GM10248 (cell line): ENCODE measurements at regions of chr15 and their contacts with region 1.

Region 1: GRCh38 chr15:79184465-79184892 is 93.9 kb upstream of the RASGRF1 start:
- DNase-seq: peak; percentile 74
- CTCF ChIP-seq: peak; percentile 96

Region 2: DNA sequence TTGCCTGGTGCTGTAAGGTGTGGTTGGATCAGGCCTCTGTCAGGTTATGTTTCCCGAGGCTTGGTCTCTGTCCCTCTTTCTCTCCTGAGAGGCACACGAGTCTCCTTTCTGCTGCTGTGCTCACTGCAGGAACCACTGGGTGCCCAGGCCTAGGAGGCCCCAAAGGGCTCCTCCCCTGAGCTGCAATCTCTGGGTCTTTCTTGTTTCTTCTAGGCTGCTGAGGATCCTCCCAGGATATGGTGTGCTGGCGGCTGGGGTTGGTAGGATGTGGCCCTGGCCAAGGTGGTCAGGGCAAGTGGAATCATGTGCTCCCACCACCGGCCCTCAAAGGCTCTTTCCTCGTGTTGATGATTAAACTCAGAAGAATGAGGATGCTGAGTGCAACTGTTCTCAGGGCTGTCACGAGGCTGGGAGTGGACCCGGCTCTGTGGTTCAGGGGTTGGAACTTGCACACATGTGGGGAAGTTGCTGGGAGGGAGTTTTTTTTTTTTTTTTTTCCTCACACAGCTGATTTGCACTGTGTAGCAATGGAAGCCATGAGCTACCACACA is 196.0 kb before region 1 on chr15:
- CTCF ChIA-PET with region 1: interaction called, 10 read pairs
- POLR2A ChIA-PET with region 1: no interaction called
- DNase-seq: peak; percentile 47
- CTCF ChIP-seq: no peak

Region 3: GRCh38 chr15:79028411-79028964 is 156.0 kb before region 1 on chr15:
- CTCF ChIA-PET with region 1: interaction called, 247 read pairs
- POLR2A ChIA-PET with region 1: no interaction called
- DNase-seq: peak; percentile 73
- CTCF ChIP-seq: peak; percentile 87

Region 4: DNA sequence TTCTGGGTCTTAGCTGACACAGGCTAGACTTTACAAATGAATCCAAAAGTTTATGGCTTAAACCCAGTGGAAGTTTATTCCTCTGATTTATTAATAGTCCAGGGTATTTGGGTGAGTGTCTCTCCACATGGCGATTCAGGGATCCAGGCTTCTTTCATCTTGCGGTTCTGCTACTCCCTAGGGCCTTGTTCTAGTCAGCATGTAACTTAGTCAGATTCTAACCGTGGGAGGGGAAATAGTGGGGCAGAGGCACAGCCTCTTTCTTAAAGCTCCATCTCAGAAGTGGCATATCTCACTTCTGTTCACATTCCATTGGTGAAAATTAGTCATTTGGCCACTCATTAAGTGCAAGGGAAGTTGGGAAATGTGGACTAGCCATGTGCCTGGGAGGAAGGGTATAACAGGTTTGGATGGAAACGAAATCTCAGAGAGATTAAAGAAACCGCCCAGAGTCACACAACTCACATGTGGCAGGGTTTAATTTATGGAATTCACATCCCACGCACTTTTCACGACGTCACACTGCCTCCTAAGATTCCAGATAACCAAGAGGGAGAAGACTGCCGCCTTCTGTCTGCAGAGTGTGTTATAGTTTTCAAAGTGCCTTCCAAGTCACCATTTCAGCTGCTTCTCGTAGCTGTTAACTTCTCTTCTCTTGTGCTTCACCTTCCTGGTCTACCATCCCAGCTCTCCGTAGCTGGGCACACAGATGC is 82.5 kb before region 1 on chr15:
- CTCF ChIA-PET with region 1: interaction called, 11 read pairs
- POLR2A ChIA-PET with region 1: no interaction called
- DNase-seq: no peak
- CTCF ChIP-seq: no peak

Region 5: DNA sequence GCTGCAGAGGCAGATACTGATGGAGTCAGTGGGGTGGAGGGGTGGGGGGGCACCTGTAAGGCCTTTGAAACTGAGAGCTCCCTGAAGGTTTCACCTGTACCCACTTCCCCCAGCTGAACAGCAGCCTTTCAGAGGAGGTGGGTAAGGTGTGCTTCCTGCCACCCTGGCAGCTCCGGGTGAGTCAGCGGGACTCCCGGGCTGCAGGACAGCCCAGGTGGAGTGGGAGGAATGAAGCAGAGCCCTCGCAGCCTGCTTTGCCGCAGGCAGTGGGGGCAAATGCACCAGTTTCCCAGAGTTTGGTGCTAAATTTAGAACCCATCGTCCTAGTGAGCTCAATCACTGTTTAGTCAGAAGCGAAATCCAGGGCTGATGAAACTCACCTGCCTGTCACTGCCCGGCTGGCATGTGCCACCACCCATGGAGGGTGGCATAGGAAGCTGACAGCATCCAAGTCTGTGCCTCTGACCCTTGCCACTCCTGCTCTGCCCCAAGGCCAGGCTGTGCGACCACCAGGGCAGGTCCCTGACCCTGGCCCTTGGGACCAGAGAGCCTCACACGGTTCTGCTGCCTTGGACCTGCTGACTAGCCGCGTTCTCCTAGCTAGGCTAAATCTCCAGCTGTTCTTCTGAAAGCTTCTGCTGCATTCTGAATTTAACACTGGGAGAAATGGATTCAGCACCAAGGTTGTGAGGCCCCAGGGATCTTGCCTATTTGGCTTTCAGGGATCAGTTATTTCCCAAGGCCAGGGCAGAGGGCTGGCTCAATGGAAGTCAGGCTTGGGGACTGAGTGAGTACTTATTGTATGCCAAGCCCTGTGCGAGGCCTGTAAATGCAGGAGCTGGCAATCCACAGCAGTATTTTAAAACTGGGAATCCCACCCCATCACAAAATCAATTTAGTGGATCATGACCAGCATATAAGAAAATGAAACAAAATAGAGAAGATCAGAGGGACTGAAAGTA is 26.6 kb before region 1 on chr15:
- CTCF ChIA-PET with region 1: interaction called, 11 read pairs
- POLR2A ChIA-PET with region 1: no interaction called
- DNase-seq: no peak
- CTCF ChIP-seq: no peak

Region 6: DNA sequence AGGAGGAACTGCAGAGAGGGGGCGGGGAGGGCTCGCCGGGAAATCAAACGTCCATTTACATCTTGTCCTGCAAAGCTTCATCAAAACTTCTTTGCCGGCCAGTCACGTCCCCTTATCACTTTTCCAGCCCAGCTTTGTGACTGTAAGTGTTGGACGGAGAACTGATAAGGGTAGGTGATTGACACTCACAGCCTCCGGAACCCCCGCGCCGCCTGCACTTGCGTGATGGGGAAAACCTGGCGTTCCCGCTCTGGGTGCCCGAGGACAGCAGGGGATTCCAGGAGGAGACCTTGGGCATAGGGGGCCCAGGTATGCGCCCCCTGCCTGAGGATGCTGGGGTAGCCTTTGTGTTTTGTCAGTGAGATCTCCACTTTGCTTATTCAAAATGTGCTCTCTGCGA is 25.2 kb after region 1 on chr15:
- CTCF ChIA-PET with region 1: interaction called, 43 read pairs
- POLR2A ChIA-PET with region 1: no interaction called
- DNase-seq: no peak
- CTCF ChIP-seq: no peak

Region 7: DNA sequence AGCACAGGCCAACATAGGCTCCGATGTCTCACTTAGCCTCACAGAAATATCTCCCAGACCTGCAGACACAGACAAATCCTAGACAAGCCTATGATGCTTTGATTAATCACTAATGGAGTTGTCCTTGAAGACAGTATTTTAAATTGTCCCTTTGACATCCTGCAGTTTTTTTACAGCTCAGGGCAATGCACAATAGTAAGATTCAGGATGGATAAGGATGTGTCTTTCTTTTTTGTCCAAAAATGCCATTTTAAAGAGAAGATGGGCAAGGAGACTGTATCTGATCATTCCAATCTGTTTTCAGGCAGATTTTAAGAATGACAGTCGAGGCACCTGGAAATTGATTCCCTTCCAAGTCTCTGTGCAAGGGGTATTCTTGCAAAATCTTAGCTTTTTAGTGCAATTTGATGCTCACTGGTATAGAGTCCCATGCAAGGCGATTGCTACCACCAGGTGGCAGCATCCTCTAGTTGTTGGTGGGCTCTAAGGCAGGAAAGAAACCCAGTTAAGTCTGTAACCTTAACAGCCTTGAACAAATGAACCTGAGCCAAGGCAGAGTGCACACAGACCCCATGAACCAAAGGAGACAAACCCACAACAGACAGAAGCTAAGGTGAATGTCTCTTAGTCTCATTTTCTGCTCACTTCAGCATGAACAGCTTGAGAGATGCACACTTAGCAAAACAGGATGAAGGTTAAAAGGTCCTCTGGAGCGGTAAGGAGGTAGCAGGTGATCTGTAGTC is 196.4 kb after region 1 on chr15:
- CTCF ChIA-PET with region 1: no interaction called
- POLR2A ChIA-PET with region 1: no interaction called
- DNase-seq: peak; percentile 72
- CTCF ChIP-seq: peak; percentile 86